PC-3 (cell line): ENCODE measurements at regions of chr20 and their contacts with region 1.

Region 1: GRCh38 chr20:57622579-57623377 is 2.6 kb upstream of the ZBP1 start:
- DNase-seq: peak; percentile 99
- ATAC-seq: peak; percentile 67
- H3K4me3 ChIP-seq: 0 out of 2 replicates have a peak overlapping the region, but pooled peaks have one; percentile 5
- H3K27ac ChIP-seq: peak overlapping the region; percentile 35
- H3K4me1 ChIP-seq: peaks cover 50% of the 10 kb centered on the region
- H3K27me3 ChIP-seq: no peaks in the 10 kb centered on the region
- CTCF ChIP-seq: peak; percentile 99

Region 2: DNA sequence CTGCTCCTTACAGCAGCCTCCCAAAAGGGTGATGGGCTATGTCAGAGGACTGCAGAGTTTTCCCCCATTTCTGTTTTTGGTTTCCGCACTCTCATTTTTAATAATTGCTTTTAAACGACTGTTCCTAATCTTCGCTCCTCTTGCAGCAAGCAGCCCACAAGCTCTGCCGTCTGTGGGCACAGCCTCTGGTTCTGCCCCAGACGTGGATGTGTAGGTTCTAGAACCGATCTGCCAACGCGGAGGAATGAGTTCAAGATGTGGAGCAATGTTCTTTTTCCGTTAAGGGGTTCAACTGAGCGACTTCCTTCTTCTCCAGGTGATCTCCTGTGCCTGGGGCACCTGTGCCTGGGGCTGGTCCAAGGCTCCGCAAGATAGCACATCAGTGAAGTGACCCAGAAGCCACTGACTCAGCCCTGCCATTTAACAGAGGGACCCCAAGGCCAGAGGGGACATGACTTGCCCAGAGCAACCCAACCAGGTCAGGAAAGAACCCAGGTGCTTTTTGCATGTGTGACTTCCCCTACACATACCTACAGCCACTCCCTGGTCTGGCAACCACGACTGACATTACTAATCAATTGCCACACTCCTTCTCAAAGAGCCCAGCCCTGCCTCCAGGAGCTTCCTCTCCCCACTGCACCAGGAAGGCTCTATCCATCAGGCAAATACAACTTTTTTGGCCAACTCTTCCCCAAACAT is 64.3 kb after region 1 on chr20:
- CTCF ChIA-PET with region 1: no interaction called
- POLR2A ChIA-PET with region 1: no interaction called
- intact Hi-C with region 1: no loop called
- DNase-seq: peak; percentile 90
- ATAC-seq: peak; percentile 84
- H3K4me3 ChIP-seq: no peak overlapping the region
- H3K27ac ChIP-seq: peak overlapping the region; percentile 17
- H3K4me1 ChIP-seq: peaks cover 52% of the 10 kb centered on the region
- H3K27me3 ChIP-seq: no peaks in the 10 kb centered on the region
- CTCF ChIP-seq: no peak

Region 3: GRCh38 chr20:57991211-57991881 is 368.6 kb after region 1 on chr20:
- CTCF ChIA-PET with region 1: no interaction called
- POLR2A ChIA-PET with region 1: no interaction called
- intact Hi-C with region 1: loop called (anchors 10 kb)
- DNase-seq: peak; percentile 97
- ATAC-seq: peak; percentile 84
- H3K4me3 ChIP-seq: no peak overlapping the region
- H3K27ac ChIP-seq: peak overlapping the region; percentile 95
- H3K4me1 ChIP-seq: peaks cover 66% of the 10 kb centered on the region
- H3K27me3 ChIP-seq: no peaks in the 10 kb centered on the region
- CTCF ChIP-seq: no peak

Region 4: GRCh38 chr20:58179432-58180099 is 556.8 kb after region 1 on chr20:
- CTCF ChIA-PET with region 1: interaction called, 5 read pairs
- POLR2A ChIA-PET with region 1: no interaction called
- intact Hi-C with region 1: loop called (anchors 1 kb)
- DNase-seq: peak; percentile 77
- ATAC-seq: peak; percentile 93
- H3K4me3 ChIP-seq: peak overlapping the region; percentile 66
- H3K27ac ChIP-seq: peak overlapping the region; percentile 4; the same call in 1 of the 2 replicates
- H3K4me1 ChIP-seq: peaks cover 12% of the 10 kb centered on the region
- H3K27me3 ChIP-seq: no peaks in the 10 kb centered on the region
- CTCF ChIP-seq: peak; percentile 99

Region 5: DNA sequence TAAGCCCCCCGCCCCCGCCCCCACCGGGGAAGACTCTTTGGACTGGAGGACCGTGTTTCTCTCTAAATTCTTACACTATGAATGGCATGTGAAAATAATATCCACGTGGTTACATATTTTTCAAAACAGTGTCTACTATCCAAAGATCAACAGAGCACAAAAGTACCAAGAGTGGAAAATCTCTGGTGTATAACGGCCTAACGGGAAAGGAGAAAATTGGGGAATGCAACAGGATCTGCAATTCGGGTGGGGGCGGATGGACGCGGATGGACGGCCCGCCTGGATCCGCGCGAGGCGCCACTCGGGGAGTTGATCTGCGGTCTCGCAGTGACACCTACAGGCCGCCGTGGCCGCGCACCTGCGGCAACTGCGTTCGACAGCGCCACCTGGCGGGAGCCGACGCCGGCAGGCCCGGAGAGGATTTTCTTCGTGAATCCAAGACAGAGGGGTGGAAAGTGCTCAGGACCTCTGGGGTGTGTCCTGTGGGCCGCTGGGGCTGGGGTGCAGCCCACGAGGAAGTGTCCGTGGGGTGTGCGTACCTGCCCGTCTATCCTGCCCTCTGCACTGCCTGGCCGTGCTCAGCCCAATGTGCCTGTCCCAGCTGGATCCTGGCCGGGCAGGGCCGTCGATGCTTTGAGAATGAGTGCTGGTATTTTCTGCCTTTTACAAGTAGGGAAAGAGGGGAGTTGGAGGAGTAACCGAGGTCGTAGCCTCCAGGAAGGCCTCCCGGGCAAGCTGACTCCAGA is 587.0 kb after region 1 on chr20:
- CTCF ChIA-PET with region 1: interaction called, 3 read pairs
- POLR2A ChIA-PET with region 1: no interaction called
- intact Hi-C with region 1: loop called (anchors 1 kb)
- DNase-seq: peak; percentile 94
- ATAC-seq: peak; percentile 89
- H3K4me3 ChIP-seq: peak overlapping the region; percentile 54
- H3K27ac ChIP-seq: no peak overlapping the region
- H3K4me1 ChIP-seq: peaks cover 6% of the 10 kb centered on the region; the same call in 1 of the 2 replicates
- H3K27me3 ChIP-seq: no peaks in the 10 kb centered on the region
- CTCF ChIP-seq: peak; percentile 100